PC-3 (cell line): ENCODE measurements at regions of chr1 and their contacts with region 1.

Region 1: DNA sequence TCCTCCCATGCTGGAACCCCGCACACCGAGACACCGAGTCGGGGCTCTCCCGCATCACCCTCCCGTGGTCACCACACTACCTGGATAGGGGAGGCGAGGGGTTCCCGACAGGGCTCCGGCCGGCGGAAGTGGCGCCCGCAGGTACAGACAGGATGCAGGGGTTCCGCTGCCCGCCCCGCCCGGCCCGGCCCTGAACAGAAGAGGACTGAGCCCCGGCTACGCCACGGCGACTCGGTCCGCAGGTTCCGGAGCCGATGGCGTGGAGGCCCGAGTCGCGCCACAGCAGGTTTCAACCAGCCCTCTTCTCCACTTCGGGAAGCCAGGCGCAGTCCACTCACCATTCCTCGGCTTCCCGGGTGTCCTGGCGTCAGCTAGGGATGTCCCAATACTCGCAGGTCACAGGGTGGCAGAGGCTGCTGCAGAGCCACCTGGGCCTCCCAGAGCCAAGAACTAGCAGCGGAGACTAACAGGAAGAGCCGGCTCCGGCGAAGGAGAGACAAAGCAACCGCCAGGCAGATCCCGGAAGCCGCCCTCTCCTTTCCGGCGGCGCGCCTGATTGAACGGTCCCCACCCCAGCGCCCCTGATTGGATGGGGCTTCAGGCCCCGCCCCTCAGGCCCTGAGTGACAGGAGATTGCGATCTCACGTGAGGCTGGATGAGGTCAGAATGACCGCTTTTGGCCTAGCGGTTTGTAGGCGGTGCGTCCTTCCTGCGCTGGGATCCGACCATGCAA is at the start of gene ZNF669:
- DNase-seq: peak; percentile 98
- ATAC-seq: peak; percentile 97
- H3K4me3 ChIP-seq: peak within 1 kb of the TSS; percentile 98
- H3K27ac ChIP-seq: peak within 1 kb of the TSS; percentile 84
- H3K4me1 ChIP-seq: peaks cover 17% of the 10 kb centered on the region
- H3K27me3 ChIP-seq: no peaks in the 10 kb centered on the region
- CTCF ChIP-seq: no peak
- total RNA-seq, gene ZNF669: 12.3 and 14.1 TPM in 2 replicates

Region 2: GRCh38 chr1:247007511-247008405 is 96.3 kb before region 1 on chr1 and contains the start of gene ZNF695:
- CTCF ChIA-PET with region 1: no interaction called
- POLR2A ChIA-PET with region 1: no interaction called
- intact Hi-C with region 1: loop called (anchors 2 kb)
- DNase-seq: peak; percentile 100
- ATAC-seq: peak; percentile 99
- H3K4me3 ChIP-seq: peak within 1 kb of the TSS; percentile 96
- H3K27ac ChIP-seq: peak within 1 kb of the TSS; percentile 27
- H3K4me1 ChIP-seq: peaks cover 5% of the 10 kb centered on the region
- H3K27me3 ChIP-seq: no peaks in the 10 kb centered on the region
- CTCF ChIP-seq: no peak
- total RNA-seq, gene ZNF695: 14.7 and 15.8 TPM in 2 replicates

Region 3: GRCh38 chr1:247078261-247079140 is 25.5 kb before region 1 on chr1 and contains the start of gene ZNF670:
- CTCF ChIA-PET with region 1: no interaction called
- POLR2A ChIA-PET with region 1: no interaction called
- intact Hi-C with region 1: loop called (anchors 2 kb)
- DNase-seq: peak; percentile 99
- ATAC-seq: peak; percentile 99
- H3K4me3 ChIP-seq: peak within 1 kb of the TSS; percentile 85
- H3K27ac ChIP-seq: peak within 1 kb of the TSS; percentile 19; the same call in 1 of the 2 replicates
- H3K4me1 ChIP-seq: peaks cover 7% of the 10 kb centered on the region
- H3K27me3 ChIP-seq: no peaks in the 10 kb centered on the region
- CTCF ChIP-seq: peak; percentile 43; the same call in 1 of the 2 replicates
- total RNA-seq, gene ZNF670: 5.6 and 5.9 TPM in 2 replicates

Region 4: DNA sequence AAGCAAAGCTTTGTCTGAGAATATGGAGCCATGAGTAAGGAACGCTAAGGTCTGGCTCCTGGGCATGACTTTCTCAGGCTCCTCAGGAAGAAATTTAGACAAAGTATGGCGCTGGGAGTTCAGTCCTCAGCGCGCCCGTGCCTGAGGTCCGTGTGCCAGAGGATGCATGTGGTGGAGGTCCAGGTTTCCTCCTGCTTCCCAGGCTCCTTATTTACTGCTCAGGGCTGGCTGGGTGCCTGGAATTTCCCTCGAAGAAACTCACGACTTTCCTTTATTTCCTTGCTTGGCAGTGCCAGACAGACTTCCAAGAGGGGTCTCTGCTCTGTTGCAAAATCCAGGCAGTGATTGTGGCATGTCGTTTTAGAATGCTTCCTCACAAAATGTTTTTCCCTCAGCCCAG is 458.2 kb after region 1 on chr1:
- CTCF ChIA-PET with region 1: no interaction called
- POLR2A ChIA-PET with region 1: no interaction called
- intact Hi-C with region 1: no loop called
- DNase-seq: no peak
- ATAC-seq: no peak
- H3K4me3 ChIP-seq: no peak overlapping the region
- H3K27ac ChIP-seq: no peak overlapping the region
- H3K4me1 ChIP-seq: no peaks in the 10 kb centered on the region
- H3K27me3 ChIP-seq: peaks cover 34% of the 10 kb centered on the region
- CTCF ChIP-seq: no peak